ENCODE measurements at regions of chr14 and their contacts with region 1.

Region 1: DNA sequence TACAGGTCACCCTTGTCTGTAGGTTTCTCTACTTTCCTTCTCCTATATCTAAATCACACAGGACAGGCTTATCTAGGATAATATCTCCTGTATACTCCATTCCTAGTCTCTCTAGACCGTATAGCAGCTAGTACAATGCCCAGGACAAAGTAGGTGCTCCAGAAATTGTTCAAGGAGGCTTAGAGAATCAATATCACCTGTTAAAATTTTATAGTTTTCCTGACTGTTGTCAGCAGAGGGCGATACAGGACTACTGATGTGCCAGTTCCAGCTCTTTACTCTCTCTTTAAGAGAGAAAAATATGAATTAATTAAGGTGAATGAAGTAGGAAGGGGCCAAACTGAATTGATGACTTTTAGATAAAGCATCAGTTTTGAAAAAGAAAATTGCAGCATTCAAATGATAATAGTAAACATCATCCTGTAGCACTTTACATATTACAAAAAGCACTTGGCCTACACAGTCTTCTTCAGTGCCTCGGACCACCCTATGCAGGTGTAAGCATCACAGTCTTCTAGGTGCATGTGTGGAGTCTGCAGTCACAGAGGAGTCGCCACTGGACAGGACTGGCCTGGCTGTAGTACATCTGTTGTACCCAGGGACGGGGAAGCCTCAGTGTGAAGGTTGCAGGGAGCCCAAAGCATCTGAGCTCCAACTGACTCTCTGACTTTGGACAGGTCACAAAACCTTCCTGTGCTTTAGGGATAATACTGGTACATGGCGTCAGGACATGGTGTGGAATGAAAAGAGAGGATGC is 61.9 kb upstream of the MAX start:
- DNase-seq: no peak
- ATAC-seq: peak; percentile 44 to 60
- H3K4me3 ChIP-seq: no peak overlapping the region
- H3K27ac ChIP-seq: no peak overlapping the region
- H3K4me1 ChIP-seq: no peaks in the 10 kb centered on the region
- H3K27me3 ChIP-seq: no peaks in the 10 kb centered on the region

Region 2: GRCh38 chr14:65412032-65412846 is 248.0 kb after region 1 on chr14 and contains the start of gene FUT8:
- intact Hi-C with region 1: loop called in 1 of 4 experiments (anchors 10 kb)
- DNase-seq: peak; percentile 97 to 99 (median 99)
- ATAC-seq: peak; percentile 97 to 98
- H3K4me3 ChIP-seq: peak within 1 kb of the TSS; percentile 89
- H3K27ac ChIP-seq: peak within 1 kb of the TSS; percentile 93
- H3K4me1 ChIP-seq: no peaks in the 10 kb centered on the region
- H3K27me3 ChIP-seq: no peaks in the 10 kb centered on the region
- total RNA-seq, gene FUT8: 12.0 to 16.9 (median 15.0) TPM

Region 3: GRCh38 chr14:65815127-65815526 is 650.9 kb after region 1 on chr14:
- intact Hi-C with region 1: loop called in 2 of 4 experiments (anchors 5 kb)
- DNase-seq: no peak
- ATAC-seq: no peak
- H3K4me3 ChIP-seq: no peak overlapping the region
- H3K27ac ChIP-seq: no peak overlapping the region
- H3K4me1 ChIP-seq: no peaks in the 10 kb centered on the region
- H3K27me3 ChIP-seq: no peaks in the 10 kb centered on the region

Region 4: GRCh38 chr14:65824285-65824977 is 660.2 kb after region 1 on chr14:
- intact Hi-C with region 1: loop called in 3 of 4 experiments (anchors 5 kb)
- DNase-seq: peak in 1 of 3 donors; percentile 20
- ATAC-seq: peak; percentile 65 to 78
- H3K4me3 ChIP-seq: no peak overlapping the region
- H3K27ac ChIP-seq: no peak overlapping the region
- H3K4me1 ChIP-seq: no peaks in the 10 kb centered on the region
- H3K27me3 ChIP-seq: no peaks in the 10 kb centered on the region

Region 5: GRCh38 chr14:65949711-65950516 is 785.7 kb after region 1 on chr14:
- intact Hi-C with region 1: loop called in 3 of 4 experiments (anchors 5 to 10 kb)
- DNase-seq: peak; percentile 36 to 76 (median 65)
- ATAC-seq: peak; percentile 63 to 69
- H3K4me3 ChIP-seq: no peak overlapping the region
- H3K27ac ChIP-seq: no peak overlapping the region
- H3K4me1 ChIP-seq: peaks cover 2% of the 10 kb centered on the region
- H3K27me3 ChIP-seq: no peaks in the 10 kb centered on the region

Region 6: GRCh38 chr14:65958664-65959562 is 794.7 kb after region 1 on chr14:
- intact Hi-C with region 1: loop called in 2 of 4 experiments (anchors 5 kb)
- DNase-seq: peak in 1 of 3 donors; percentile 52
- ATAC-seq: peak in 1 of 2 donors; percentile 47
- H3K4me3 ChIP-seq: no peak overlapping the region
- H3K27ac ChIP-seq: no peak overlapping the region
- H3K4me1 ChIP-seq: no peaks in the 10 kb centered on the region
- H3K27me3 ChIP-seq: no peaks in the 10 kb centered on the region

Region 7: DNA sequence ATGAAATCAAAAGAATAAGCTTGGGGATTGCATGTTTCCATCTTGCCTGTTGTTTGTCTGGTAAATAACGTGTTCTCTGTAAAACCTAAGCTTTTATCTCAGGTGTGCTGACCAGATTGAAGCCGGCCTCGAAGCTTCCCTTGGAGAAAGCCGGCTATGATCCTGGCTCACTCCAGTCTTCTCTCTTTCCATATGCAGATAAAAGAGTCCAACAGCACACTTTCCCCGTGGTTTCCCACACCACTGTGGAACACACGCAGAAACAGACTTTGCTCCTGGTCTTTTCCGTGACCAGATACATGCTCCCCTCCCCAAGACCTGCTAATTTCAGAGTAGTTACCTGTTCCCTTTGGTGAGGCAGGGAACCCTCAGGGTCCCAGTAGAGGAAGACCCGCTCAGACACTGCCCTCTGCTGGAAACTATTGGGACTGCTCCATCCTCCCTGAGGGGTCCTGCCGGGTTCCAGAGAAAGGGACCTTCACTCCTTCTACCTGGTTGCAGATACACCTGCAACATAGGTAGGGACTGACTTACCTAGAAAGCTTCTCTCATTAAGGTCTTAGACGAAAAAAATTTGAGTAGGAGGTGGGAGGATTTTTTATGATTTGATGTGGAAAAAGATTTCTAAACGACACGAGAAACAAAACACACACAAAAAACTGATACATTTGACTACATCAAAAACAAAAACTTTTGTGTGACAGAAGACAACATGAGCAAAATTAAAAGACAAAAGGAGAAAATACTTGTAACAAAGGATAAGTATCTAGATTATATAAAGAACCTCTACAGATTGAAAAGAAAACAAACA is 906.5 kb after region 1 on chr14:
- intact Hi-C with region 1: loop called in 1 of 4 experiments (anchors 10 kb)
- DNase-seq: peak in 2 of 3 donors; percentile 65 to 76
- ATAC-seq: peak; percentile 43
- H3K4me3 ChIP-seq: no peak overlapping the region
- H3K27ac ChIP-seq: no peak overlapping the region
- H3K4me1 ChIP-seq: no peaks in the 10 kb centered on the region
- H3K27me3 ChIP-seq: no peaks in the 10 kb centered on the region

Measured in right cardiac atrium (tissue), 5 donors.